CD4-positive, alpha-beta memory T cell (primary cell): ENCODE measurements at regions of chr1 and their contacts with region 1.

Region 1: DNA sequence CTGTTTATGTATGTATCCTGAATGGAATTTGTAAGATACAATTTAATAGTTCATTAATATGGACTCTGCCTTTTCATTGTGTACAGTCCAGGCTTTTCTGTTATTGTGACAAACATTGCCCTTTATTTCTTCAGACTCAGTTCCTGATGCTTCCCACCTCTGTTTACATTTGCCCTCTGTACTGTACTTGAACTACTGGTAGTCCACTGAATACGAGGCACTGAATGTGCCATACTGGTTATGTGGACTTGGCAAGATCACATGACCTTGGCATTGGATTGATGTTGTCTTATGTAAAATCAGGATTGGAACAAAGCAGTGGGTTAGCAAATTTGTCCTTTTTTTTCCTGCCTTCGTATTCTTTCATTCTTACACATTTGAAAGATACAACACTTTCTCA is 27.8 kb downstream of the RALGPS2 start:
- DNase-seq: no peak
- H3K4me3 ChIP-seq: no peak overlapping the region
- H3K4me3 Mint-ChIP-seq: no peak overlapping the region
- H3K27ac ChIP-seq: no peak overlapping the region
- H3K27ac Mint-ChIP-seq: peak overlapping the region in 1 of 7 donors; percentile 54
- H3K4me1 ChIP-seq: no peaks in the 10 kb centered on the region
- H3K4me1 Mint-ChIP-seq: peaks cover 0 to 3% (median under 1%) of the 10 kb centered on the region in 4 donors
- H3K27me3 ChIP-seq: no peaks in the 10 kb centered on the region
- H3K27me3 Mint-ChIP-seq: no peaks in the 10 kb centered on the region

Region 2: DNA sequence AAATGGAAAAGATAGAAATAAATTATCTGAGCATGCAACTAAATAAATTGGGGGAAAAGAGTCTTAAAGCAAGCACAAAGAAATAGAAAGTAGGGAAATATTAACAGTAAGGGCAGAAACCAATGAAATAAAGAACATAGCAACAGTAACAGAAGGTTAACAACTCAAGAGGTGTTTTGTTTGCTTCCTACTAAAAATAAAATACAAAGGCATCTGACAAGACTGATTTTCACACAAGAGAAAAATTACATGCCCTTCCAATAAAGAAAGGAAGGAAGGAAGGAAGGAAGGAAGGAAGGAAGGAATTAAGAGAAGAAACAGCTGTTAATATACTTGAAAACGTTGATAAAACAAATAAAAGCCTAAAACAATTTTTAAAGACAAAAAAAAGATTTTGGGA is 1023.2 kb before region 1 on chr1:
- CTCF ChIA-PET with region 1: no interaction called
- POLR2A ChIA-PET with region 1: no interaction called
- intact Hi-C with region 1: no loop called
- DNase-seq: no peak
- H3K4me3 ChIP-seq: no peak overlapping the region
- H3K4me3 Mint-ChIP-seq: no peak overlapping the region
- H3K27ac ChIP-seq: no peak overlapping the region
- H3K27ac Mint-ChIP-seq: no peak overlapping the region
- H3K4me1 ChIP-seq: no peaks in the 10 kb centered on the region
- H3K4me1 Mint-ChIP-seq: no peaks in the 10 kb centered on the region
- H3K27me3 ChIP-seq: no peaks in the 10 kb centered on the region
- H3K27me3 Mint-ChIP-seq: no peaks in the 10 kb centered on the region

Region 3: DNA sequence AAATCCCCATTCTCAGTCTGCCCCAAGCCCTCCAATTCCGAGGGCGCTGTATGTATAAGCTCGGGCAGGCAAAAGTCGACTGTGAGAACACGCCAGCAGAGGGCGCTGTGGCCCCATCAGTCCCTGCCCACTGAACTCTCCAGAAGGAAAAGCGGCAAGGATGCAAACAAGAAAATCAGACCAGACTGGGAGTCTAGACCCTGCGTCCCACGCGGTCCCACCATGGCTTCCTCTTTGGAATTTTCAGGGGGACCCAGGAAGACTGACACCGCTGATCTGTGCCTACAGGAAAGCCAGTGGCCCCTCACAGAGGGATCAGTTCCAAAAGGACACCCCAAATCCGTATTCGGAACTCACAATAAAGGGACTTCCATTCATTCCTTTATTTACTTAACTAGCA is 220.5 kb before region 1 on chr1:
- CTCF ChIA-PET with region 1: interaction called, 17 read pairs
- POLR2A ChIA-PET with region 1: no interaction called
- intact Hi-C with region 1: loop called (anchors 1 kb)
- DNase-seq: peak; percentile 56 to 64 (median 60)
- H3K4me3 ChIP-seq: no peak overlapping the region
- H3K4me3 Mint-ChIP-seq: peak overlapping the region in 1 of 8 donors; percentile 16
- H3K27ac ChIP-seq: no peak overlapping the region
- H3K27ac Mint-ChIP-seq: peak overlapping the region in 3 of 7 donors; percentile 18 to 53 (median 43)
- H3K4me1 ChIP-seq: peaks cover 6% of the 10 kb centered on the region
- H3K4me1 Mint-ChIP-seq: peaks cover 0 to 6% (median 3%) of the 10 kb centered on the region in 4 donors
- H3K27me3 ChIP-seq: no peaks in the 10 kb centered on the region
- H3K27me3 Mint-ChIP-seq: peaks cover 0 to 1% of the 10 kb centered on the region in 2 donors

Region 4: DNA sequence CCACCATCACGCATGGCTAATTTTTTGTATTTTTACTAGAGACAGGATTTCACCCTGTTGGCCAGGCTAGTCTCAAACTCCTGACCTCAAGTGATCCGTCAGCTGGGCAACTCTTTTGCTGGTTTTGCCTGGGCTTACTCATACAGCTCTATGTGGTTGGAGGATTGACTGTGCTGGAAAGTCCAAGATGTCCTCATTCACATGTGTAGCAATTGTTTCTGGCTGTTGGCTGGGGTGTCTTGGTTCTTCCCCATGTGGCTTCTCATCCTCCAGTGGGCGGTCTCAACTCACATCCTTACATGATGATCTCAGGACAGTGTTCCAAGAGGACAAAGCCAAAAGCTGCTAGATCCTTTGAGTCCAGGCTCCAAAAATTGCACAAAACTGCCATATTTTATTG is 186.7 kb before region 1 on chr1:
- CTCF ChIA-PET with region 1: no interaction called
- POLR2A ChIA-PET with region 1: no interaction called
- intact Hi-C with region 1: no loop called
- DNase-seq: no peak
- H3K4me3 ChIP-seq: no peak overlapping the region
- H3K4me3 Mint-ChIP-seq: no peak overlapping the region
- H3K27ac ChIP-seq: no peak overlapping the region
- H3K27ac Mint-ChIP-seq: no peak overlapping the region
- H3K4me1 ChIP-seq: no peaks in the 10 kb centered on the region
- H3K4me1 Mint-ChIP-seq: no peaks in the 10 kb centered on the region
- H3K27me3 ChIP-seq: no peaks in the 10 kb centered on the region
- H3K27me3 Mint-ChIP-seq: no peaks in the 10 kb centered on the region

Region 5: DNA sequence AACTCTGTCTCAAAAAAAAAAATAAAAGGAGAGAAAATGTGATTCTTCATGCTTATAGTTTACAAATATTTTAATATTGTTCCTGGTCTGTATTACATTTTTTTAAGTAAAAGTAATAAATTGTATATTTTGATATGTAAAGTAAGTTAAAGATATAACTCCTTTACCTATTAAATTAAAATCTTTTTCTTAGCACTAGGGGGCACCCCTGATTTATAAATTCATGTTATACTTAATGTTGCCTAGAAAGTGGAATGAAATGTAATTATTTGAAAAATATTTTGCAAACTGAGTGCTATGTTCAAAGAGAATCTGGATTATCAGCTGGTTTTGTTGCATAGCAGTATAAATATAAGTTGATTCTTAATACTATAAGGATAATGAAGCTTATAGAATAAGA is 21.4 kb after region 1 on chr1:
- CTCF ChIA-PET with region 1: no interaction called
- POLR2A ChIA-PET with region 1: no interaction called
- intact Hi-C with region 1: no loop called
- DNase-seq: peak in 4 of 5 donors; percentile 6 to 25 (median 8)
- H3K4me3 ChIP-seq: no peak overlapping the region
- H3K4me3 Mint-ChIP-seq: no peak overlapping the region
- H3K27ac ChIP-seq: no peak overlapping the region
- H3K27ac Mint-ChIP-seq: no peak overlapping the region
- H3K4me1 ChIP-seq: no peaks in the 10 kb centered on the region
- H3K4me1 Mint-ChIP-seq: no peaks in the 10 kb centered on the region
- H3K27me3 ChIP-seq: no peaks in the 10 kb centered on the region
- H3K27me3 Mint-ChIP-seq: no peaks in the 10 kb centered on the region